Psoas muscle (tissue), 8 donors: ENCODE measurements at regions of chr6 and their contacts with region 1.

Region 1: DNA sequence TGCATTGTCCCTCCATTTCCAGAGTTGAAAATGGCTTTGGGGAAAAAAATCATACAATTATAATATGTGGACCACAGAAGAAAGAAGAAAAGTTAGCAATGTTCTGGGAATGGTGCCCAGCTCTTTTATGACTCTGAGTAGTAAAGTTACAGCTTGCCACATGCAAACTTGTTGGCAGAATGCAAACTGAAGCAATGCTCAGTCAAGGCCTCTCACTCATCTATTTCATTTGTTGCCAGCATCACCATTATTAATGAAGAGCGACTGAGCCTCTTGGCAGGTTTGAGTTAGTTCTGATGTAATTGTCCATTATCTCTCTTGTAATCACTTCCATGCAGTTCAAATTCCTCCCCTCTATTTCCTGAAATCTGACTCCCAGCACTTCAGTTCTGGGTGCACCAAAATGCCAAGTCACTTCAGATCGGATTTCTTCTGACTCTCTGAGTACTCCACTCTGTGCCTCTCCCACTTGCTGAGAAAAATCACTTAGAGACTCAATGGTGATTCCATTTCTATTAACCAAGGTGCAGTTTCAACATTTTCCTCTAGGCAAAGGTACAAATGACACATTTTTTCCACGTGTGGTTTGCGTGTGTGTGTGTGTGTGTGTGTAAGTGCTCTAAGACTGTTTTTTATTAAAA is 154.4 kb upstream of the STMND1 start:
- DNase-seq: no peak
- ATAC-seq: peak; percentile 93 to 96 (median 96)
- H3K4me3 ChIP-seq: no peak overlapping the region
- H3K27ac ChIP-seq: peak overlapping the region; percentile 72
- H3K4me1 ChIP-seq: peaks cover 17% of the 10 kb centered on the region
- H3K27me3 ChIP-seq: no peaks in the 10 kb centered on the region
- CTCF ChIP-seq: no peak

Region 2: GRCh38 chr6:16836144-16836981 is 111.1 kb before region 1 on chr6:
- intact Hi-C with region 1: loop called in 1 of 2 experiments (anchors 5 kb)
- DNase-seq: no peak
- ATAC-seq: peak; percentile 65 to 90 (median 78)
- H3K4me3 ChIP-seq: peak overlapping the region; percentile 55
- H3K27ac ChIP-seq: peak overlapping the region; percentile 39
- H3K4me1 ChIP-seq: no peaks in the 10 kb centered on the region
- H3K27me3 ChIP-seq: no peaks in the 10 kb centered on the region
- CTCF ChIP-seq: no peak

Region 3: GRCh38 chr6:17167327-17167979 is 220.0 kb after region 1 on chr6:
- intact Hi-C with region 1: no loop called
- DNase-seq: peak; percentile 28 to 63
- ATAC-seq: peak; percentile 64 to 72 (median 68)
- H3K4me3 ChIP-seq: peak overlapping the region; percentile 24
- H3K27ac ChIP-seq: peak overlapping the region; percentile 96
- H3K4me1 ChIP-seq: peaks cover 19% of the 10 kb centered on the region
- H3K27me3 ChIP-seq: no peaks in the 10 kb centered on the region
- CTCF ChIP-seq: peak; percentile 61

Region 4: DNA sequence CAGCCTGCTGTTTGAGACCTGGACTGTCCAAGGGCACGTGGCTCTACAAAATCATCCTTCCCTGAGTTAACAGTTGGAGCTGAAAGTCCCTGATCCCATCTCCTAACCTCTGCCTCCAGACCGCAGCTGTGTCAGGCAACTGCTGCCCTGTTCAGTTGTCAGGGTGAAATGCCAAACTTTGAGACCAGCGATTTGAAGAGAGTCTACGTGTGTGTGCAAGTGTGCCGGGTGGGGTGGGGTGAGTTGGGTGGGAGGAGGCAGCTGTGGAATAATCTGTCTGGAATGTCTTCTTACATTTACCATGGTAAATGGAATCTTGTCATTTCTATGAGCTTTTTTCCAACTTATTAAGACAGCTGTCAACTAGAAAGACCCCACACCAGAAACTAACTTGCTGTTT is 571.6 kb after region 1 on chr6:
- intact Hi-C with region 1: no loop called
- DNase-seq: no peak
- ATAC-seq: peak; percentile 20 to 29 (median 26)
- H3K4me3 ChIP-seq: no peak overlapping the region
- H3K27ac ChIP-seq: no peak overlapping the region
- H3K4me1 ChIP-seq: no peaks in the 10 kb centered on the region
- H3K27me3 ChIP-seq: no peaks in the 10 kb centered on the region
- CTCF ChIP-seq: no peak